ENCODE measurements at regions of chr12 and their contacts with region 1.

Region 1: DNA sequence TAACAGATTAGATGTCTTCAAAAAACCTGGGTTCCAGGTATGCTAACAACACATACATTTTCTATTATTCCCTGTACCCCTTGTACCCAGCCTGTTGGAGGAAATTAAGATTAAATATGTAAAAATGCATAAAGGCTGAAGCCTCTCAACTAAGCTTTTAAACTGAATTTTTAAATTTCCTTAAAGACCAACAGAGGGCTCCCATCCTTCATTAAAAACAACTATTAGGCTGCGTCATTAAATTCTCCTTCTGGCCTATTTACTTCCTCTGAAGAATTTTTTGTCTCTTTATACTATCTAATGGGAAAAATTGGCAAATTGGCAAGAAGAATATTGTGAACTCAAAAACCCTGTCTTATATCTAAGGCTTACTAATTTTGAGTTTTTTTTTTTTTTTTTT is 21.8 kb downstream of the SENP1 start:
- DNase-seq: peak; percentile 15
- H3K4me3 ChIP-seq: no peak overlapping the region
- H3K27ac ChIP-seq: no peak overlapping the region
- H3K4me1 ChIP-seq: no peaks in the 10 kb centered on the region
- H3K27me3 ChIP-seq: no peaks in the 10 kb centered on the region
- CTCF ChIP-seq: no peak
- POLR2A ChIP-seq: no peak

Region 2: GRCh38 chr12:48165094-48165981 is 81.3 kb after region 1 on chr12:
- CTCF ChIA-PET with region 1: interaction called, 16 read pairs
- POLR2A ChIA-PET with region 1: no interaction called
- dilution Hi-C with region 1: no loop called
- intact Hi-C with region 1: loop called (anchors 1 kb)
- DNase-seq: peak; percentile 67
- H3K4me3 ChIP-seq: no peak overlapping the region
- H3K27ac ChIP-seq: no peak overlapping the region
- H3K4me1 ChIP-seq: no peaks in the 10 kb centered on the region
- H3K27me3 ChIP-seq: peaks cover 10 to 23% of the 10 kb centered on the region in 2 experiments
- CTCF ChIP-seq: peak; percentile 62 to 80
- POLR2A ChIP-seq: no peak

Region 3: GRCh38 chr12:48189331-48190125 is 105.5 kb after region 1 on chr12:
- CTCF ChIA-PET with region 1: interaction called, 4 read pairs
- POLR2A ChIA-PET with region 1: no interaction called
- dilution Hi-C with region 1: no loop called
- intact Hi-C with region 1: loop called (anchors 1 kb)
- DNase-seq: peak; percentile 82
- H3K4me3 ChIP-seq: no peak overlapping the region
- H3K27ac ChIP-seq: no peak overlapping the region
- H3K4me1 ChIP-seq: peaks cover 2% of the 10 kb centered on the region
- H3K27me3 ChIP-seq: peaks cover 25 to 38% of the 10 kb centered on the region in 2 experiments
- CTCF ChIP-seq: peak; percentile 62 to 78
- POLR2A ChIP-seq: no peak

Measured in endothelial cell of umbilical vein (primary cell).